B cell (primary cell): ENCODE measurements at regions of chrX and their contacts with region 1.

Region 1: GRCh38 chrX:120244735-120245498 is 5.7 kb upstream of the ZBTB33 start:
- DNase-seq: peak; percentile 75
- ATAC-seq: peak; percentile 89
- H3K4me3 ChIP-seq: peak overlapping the region; percentile 72 to 80 (median 78)
- H3K4me3 Mint-ChIP-seq: peak overlapping the region; percentile 98
- H3K27ac ChIP-seq: peak overlapping the region; percentile 69 to 72
- H3K27ac Mint-ChIP-seq: peak overlapping the region; percentile 97
- H3K4me1 ChIP-seq: peaks cover 0 to 12% of the 10 kb centered on the region in 2 donors
- H3K4me1 Mint-ChIP-seq: peaks cover 16% of the 10 kb centered on the region
- H3K27me3 ChIP-seq: no peaks in the 10 kb centered on the region
- H3K27me3 Mint-ChIP-seq: no peaks in the 10 kb centered on the region
- CTCF ChIP-seq: no peak

Region 2: DNA sequence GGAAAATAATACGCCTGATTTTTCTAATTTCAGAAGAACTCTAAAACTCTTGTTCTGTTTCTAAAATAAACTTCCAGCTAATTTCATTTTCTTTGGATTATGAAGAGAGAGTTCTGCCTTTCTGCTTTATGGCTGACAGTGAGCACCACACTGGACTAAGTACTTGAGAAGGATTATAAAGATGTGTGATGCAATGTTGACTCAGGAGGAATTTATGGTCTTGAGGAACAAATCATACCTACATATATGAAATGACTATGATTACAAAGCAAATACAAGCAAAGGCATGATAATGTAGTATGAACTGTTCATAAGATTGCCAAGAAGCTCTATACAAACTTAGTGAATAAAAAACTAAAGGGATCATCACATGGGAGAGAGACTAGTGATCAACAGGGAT is 789.7 kb before region 1 on chrX:
- CTCF ChIA-PET with region 1: no interaction called
- POLR2A ChIA-PET with region 1: no interaction called
- intact Hi-C with region 1: no loop called
- DNase-seq: no peak
- ATAC-seq: no peak
- H3K4me3 ChIP-seq: no peak overlapping the region
- H3K4me3 Mint-ChIP-seq: no peak overlapping the region
- H3K27ac ChIP-seq: no peak overlapping the region
- H3K27ac Mint-ChIP-seq: no peak overlapping the region
- H3K4me1 ChIP-seq: no peaks in the 10 kb centered on the region
- H3K4me1 Mint-ChIP-seq: no peaks in the 10 kb centered on the region
- H3K27me3 ChIP-seq: no peaks in the 10 kb centered on the region
- H3K27me3 Mint-ChIP-seq: no peaks in the 10 kb centered on the region
- CTCF ChIP-seq: no peak

Region 3: GRCh38 chrX:119943185-119943988 is 301.5 kb before region 1 on chrX and contains the start of gene NKAP:
- CTCF ChIA-PET with region 1: no interaction called
- POLR2A ChIA-PET with region 1: no interaction called
- intact Hi-C with region 1: loop called (anchors 1 kb)
- DNase-seq: peak; percentile 90
- ATAC-seq: peak; percentile 88
- H3K4me3 ChIP-seq: peak within 1 kb of the TSS; percentile 56 to 91 (median 75)
- H3K4me3 Mint-ChIP-seq: peak within 1 kb of the TSS; percentile 96
- H3K27ac ChIP-seq: peak within 1 kb of the TSS; percentile 86 to 88
- H3K27ac Mint-ChIP-seq: peak within 1 kb of the TSS; percentile 94
- H3K4me1 ChIP-seq: peaks cover 15 to 21% of the 10 kb centered on the region in 2 donors
- H3K4me1 Mint-ChIP-seq: peaks cover 18% of the 10 kb centered on the region
- H3K27me3 ChIP-seq: no peaks in the 10 kb centered on the region
- H3K27me3 Mint-ChIP-seq: peaks cover 1% of the 10 kb centered on the region
- CTCF ChIP-seq: no peak
- total RNA-seq, gene NKAP: 17.9 TPM in 2 replicates